Ovary (tissue), 10 donors: ENCODE measurements at regions of chr14 and their contacts with region 1.

Region 1: DNA sequence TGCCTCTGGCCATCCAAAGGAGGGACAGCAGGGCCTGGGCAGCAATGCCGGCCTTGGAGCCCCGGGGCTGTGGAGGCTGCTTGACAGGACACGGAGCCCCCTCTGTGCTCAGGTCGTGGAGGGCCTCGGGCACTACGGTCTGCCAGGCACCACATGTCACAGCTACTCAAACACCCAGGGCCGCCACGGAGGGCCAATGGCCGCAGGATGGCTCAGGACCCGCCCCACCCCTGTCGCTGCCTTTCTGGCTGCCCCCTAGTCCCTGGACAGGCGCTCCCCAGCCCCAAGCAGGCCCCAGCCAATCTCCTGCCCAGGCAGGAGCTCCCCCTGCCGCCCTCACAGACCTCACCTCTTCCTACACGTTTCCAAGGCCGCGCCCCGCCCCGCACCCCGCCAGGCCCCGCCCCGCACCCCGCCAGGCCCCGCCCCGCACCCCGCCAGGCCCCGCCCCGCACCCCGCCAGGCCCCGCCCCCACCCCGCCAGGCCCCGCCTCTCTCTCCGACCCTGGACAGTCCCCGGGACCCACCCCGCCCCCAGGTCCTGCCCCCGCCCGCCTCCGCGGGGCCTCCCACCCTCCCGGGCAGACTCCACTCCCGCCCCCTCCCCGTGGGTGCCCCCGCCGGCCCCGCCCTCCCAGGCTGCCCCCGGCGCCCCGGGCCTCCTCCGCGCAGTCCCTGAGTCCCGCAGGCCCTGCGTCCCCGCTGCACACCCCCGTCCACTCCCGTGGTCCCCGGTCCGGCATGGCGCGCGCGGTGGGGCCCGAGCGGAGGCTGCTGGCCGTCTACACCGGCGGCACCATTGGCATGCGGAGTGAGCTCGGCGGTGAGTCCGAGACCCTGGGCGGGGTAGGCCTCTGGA is at the start of gene ASPG:
- DNase-seq: peak; percentile 81 to 87 (median 83)
- H3K4me3 ChIP-seq: peak within 1 kb of the TSS; percentile 37
- H3K27ac ChIP-seq: peak within 1 kb of the TSS; percentile 14 to 72
- H3K4me1 ChIP-seq: peaks cover 13% of the 10 kb centered on the region
- H3K27me3 ChIP-seq: no peaks in the 10 kb centered on the region
- CTCF ChIP-seq: no peak
- EP300 ChIP-seq: no peak
- POLR2A ChIP-seq: peak; percentile 27
- total RNA-seq, gene ASPG: 10.5 to 28.8 (median 19.8) TPM

Region 2: DNA sequence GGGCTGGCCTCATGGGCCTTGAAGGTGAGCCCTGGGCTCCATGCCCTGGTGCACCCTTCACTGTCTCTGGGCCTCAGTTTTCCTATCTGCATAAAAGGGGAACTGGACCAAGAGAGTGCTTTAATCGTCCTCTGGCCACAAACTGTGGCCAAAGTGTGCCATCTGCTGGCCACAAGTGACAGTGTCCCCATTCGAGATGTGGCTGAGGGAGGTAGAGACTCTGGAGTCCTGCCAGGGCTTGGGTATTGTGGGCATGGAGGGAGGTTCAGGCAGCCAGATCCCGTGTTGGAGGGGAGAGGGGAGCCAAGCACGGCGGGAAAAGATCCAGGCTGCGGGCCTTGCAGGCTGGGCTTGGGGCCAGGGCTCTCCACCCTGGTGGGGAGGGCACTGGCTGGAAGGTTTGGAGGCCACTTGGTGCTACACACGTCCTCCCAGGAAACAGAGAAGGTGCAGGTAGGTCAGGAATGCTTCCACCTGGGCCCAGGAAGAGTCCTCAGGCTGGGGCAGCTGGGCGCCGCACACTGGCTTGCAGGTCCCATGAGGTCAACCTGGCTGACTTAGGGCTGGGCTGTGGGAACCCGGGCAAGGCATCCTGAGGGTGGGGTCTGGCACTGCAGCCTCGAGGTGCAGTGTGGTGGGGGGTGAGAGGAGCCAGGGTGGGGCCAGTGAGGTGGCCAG is 45.9 kb after region 1 on chr14:
- intact Hi-C with region 1: loop called in 1 of 4 experiments (anchors 5 kb)
- DNase-seq: peak in 4 of 5 donors; percentile 23 to 56 (median 42)
- H3K4me3 ChIP-seq: no peak overlapping the region
- H3K27ac ChIP-seq: no peak overlapping the region
- H3K4me1 ChIP-seq: no peaks in the 10 kb centered on the region
- H3K27me3 ChIP-seq: no peaks in the 10 kb centered on the region
- CTCF ChIP-seq: peak in 1 of 3 donors; percentile 18
- EP300 ChIP-seq: no peak
- POLR2A ChIP-seq: no peak

Region 3: DNA sequence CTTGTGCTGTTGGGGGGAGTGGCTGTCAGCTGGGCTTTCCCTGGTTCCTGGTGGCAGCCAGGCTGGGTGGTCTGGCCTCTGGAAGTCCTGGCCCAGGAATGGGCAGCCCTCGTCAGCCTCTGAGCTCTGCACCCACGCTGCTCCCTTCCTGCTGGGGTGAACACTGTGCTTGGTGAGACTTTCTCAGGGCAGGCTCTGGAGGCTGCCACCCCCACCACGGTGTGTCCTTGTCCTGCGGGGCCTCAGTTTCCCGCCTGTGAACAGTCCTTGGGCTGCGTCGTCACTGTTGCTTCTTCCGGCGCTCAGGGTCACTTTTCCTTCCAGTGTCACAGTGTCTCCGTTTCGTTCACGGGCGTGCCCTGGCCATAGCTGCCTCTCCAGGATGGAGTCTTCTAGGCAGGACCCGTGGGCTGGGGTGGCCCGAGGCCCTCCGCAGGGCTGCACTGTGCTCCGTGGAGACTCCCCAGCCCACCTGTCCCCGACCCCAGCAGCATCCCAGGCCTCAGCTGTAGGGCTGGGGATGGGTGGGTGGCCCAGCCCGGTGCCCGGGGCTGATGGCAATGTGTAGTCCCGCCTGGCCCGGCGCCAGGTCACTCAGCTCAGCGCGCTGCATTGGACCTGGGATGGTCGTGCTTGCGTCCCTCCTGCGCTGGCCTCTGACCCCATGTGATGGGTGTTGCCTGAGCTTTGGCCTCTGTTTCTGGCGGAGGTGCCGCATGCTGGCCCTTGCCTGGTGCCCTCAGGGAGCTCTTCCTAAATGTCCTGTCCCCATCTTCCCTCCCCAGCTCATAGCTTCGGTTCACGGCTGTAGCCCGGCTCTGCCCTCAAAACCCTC is 59.9 kb after region 1 on chr14:
- intact Hi-C with region 1: no loop called
- DNase-seq: peak; percentile 8 to 39 (median 26)
- H3K4me3 ChIP-seq: no peak overlapping the region
- H3K27ac ChIP-seq: no peak overlapping the region
- H3K4me1 ChIP-seq: peaks cover 4% of the 10 kb centered on the region
- H3K27me3 ChIP-seq: no peaks in the 10 kb centered on the region
- CTCF ChIP-seq: no peak
- EP300 ChIP-seq: no peak
- POLR2A ChIP-seq: no peak

Region 4: DNA sequence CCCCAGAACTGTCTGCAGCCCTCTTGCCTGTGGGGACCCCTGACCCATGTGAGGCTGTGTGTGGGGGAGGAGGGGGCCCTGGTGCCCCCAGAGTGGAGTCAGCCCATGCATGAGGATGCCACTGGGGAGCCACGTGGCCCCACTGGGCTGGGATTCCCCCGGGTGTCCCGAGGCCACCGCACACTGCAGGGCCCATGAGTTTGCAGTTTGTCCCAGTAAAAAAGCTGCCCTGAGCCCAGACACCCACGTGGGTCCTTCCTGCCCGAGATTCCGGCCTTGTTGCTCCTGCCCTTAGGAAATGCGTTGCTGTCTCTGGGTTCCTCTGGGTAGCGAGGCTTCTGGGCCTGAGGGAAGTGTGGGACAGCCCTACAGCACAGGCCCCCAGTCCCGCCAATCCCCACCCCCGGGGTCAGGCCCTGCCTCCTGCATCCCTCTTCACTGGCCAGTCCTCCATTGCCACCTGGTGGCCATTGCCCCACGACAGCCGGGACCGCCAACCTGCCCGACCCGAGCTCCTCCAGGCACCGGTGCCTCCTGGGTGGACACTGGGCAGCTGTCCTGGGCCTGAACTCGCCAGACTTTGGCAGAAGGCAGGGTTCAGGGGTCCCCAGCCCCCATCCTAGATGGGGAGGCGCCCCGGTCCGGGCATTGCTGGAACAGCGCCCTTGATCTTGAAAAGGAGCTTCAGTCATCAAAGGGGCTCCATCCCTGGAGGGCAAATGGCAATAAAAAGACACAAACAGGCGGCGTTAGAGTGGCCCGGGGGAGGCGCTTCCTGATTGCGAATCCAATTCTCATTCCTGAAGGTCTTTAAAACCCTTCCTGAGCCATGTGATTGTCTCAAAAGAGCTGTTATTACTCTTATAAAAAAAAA is 478.7 kb after region 1 on chr14:
- intact Hi-C with region 1: loop called in 2 of 4 experiments (anchors 5 to 10 kb)
- DNase-seq: peak; percentile 62 to 84 (median 81)
- H3K4me3 ChIP-seq: no peak overlapping the region
- H3K27ac ChIP-seq: no peak overlapping the region
- H3K4me1 ChIP-seq: no peaks in the 10 kb centered on the region
- H3K27me3 ChIP-seq: no peaks in the 10 kb centered on the region
- CTCF ChIP-seq: peak; percentile 79 to 92 (median 90)
- EP300 ChIP-seq: no peak
- POLR2A ChIP-seq: peak; percentile 21